ENCODE measurements at regions of chr3 and their contacts with region 1.

Region 1: DNA sequence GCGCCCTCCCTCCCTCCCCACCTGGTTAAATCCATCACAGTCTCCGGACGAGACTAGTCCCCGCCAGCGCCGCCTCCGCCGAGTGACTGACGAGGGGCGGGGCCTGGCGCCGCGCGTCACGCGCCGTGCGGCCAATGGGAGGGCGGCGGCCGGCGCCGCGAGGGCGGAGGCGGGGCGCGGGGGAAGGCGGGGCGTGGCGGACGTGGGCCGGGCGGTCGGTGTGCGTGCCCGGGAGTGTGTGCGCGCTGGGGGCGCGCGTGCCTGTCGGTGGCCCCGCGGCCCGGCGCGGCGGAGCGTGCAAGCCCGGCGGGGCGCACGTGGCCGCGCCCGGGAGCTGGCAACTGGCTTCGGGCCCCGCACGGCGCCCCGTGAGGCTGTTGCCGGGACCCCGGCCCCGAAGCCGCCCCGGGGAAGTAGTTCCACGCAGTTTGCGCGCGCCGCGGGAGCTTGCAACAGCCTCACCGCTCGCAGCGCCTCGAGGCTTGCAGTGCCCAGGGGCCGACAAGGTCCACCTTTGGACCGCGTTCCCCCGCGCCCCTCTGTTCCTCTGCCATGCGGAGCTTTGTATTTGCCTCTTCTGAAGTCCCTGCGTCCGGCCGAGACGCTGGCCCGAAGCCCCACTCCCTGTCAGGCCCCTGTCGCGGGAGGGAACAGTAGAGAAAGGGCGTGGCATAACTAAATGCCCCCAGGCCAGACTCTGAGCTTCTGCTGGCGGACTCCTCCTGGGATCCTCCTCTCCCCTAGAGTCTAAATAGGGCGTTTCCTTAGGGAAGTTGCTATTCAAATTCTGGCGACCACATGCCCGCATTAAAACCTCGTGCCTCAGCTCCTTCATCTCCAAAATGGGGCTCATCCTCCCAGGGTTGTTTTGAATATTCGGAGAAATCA is 400.9 kb downstream of the SHQ1 start:
- DNase-seq: peak; percentile 87 to 94 (median 89)
- H3K4me3 ChIP-seq: peak overlapping the region; percentile 81 to 99 (median 98)
- H3K4me3 Mint-ChIP-seq: peak overlapping the region; percentile 68 to 76
- H3K27ac ChIP-seq: peak overlapping the region; percentile 18 to 91
- H3K27ac Mint-ChIP-seq: peak overlapping the region in 4 of 7 donors; percentile 39 to 82 (median 74)
- H3K4me1 ChIP-seq: peaks cover 20 to 43% of the 10 kb centered on the region in 2 donors
- H3K4me1 Mint-ChIP-seq: peaks cover 44% of the 10 kb centered on the region
- H3K27me3 ChIP-seq: peaks cover 0 to 4% of the 10 kb centered on the region in 2 donors
- H3K27me3 Mint-ChIP-seq: peaks cover 4 to 9% (median 7%) of the 10 kb centered on the region in 3 donors
- CTCF ChIP-seq: no peak

Region 2: GRCh38 chr3:72413228-72413627 is 34.1 kb before region 1 on chr3:
- intact Hi-C with region 1: no loop called
- DNase-seq: no peak
- H3K4me3 ChIP-seq: no peak overlapping the region
- H3K4me3 Mint-ChIP-seq: no peak overlapping the region
- H3K27ac ChIP-seq: no peak overlapping the region
- H3K27ac Mint-ChIP-seq: peak overlapping the region in 1 of 7 donors; percentile 55
- H3K4me1 ChIP-seq: peaks cover 22 to 68% of the 10 kb centered on the region in 2 donors
- H3K4me1 Mint-ChIP-seq: peaks cover 65% of the 10 kb centered on the region
- H3K27me3 ChIP-seq: no peaks in the 10 kb centered on the region
- H3K27me3 Mint-ChIP-seq: no peaks in the 10 kb centered on the region
- CTCF ChIP-seq: no peak

Region 3: DNA sequence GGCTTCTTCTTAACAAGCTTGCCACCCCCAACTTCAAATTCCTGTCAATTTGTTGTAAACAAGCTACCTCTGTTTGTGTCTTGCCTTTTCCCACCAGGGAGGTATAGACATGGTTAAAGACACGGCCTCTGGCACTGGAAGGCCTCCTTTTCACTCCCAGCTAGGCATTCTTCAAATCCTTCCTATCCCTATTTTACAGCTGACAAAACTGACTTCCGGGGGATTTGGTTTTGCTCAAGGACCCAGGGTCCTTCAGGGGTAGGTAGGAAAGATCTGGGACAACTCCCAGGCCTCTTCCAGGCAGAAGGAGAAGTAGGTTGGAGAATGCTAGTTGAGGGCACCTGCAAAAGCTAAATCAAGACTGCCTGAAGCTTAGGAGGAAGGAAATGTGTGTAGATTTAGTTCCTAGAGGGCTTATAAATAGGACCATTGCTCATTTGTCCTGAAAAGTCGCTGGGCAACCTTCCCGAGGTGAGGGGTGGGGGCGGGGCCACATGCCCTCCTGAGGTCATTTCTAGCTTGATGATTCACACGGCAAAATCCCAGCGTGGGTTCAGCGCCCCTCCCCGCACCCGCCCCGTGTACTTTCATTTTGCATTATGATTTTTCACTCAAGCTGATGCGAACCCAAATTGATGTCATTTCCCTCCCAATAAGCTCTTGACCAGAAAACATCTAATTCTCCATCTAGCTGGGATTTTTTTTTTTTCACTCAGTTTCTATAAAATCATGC is 35.5 kb after region 1 on chr3:
- intact Hi-C with region 1: loop called (anchors 5 kb)
- DNase-seq: peak; percentile 81 to 95 (median 88)
- H3K4me3 ChIP-seq: peak overlapping the region; percentile 24 to 67 (median 29)
- H3K4me3 Mint-ChIP-seq: peak overlapping the region; percentile 75 to 80
- H3K27ac ChIP-seq: peak overlapping the region in 1 of 2 donors; percentile 53
- H3K27ac Mint-ChIP-seq: peak overlapping the region; percentile 54 to 86 (median 81)
- H3K4me1 ChIP-seq: peaks cover 18 to 25% of the 10 kb centered on the region in 2 donors
- H3K4me1 Mint-ChIP-seq: peaks cover 25% of the 10 kb centered on the region
- H3K27me3 ChIP-seq: no peaks in the 10 kb centered on the region
- H3K27me3 Mint-ChIP-seq: peaks cover 0 to 2% (median 1%) of the 10 kb centered on the region in 3 donors
- CTCF ChIP-seq: no peak

Region 4: GRCh38 chr3:72629191-72629631 is 181.9 kb after region 1 on chr3:
- intact Hi-C with region 1: loop called in 1 of 2 experiments (anchors 10 kb)
- DNase-seq: peak; percentile 87 to 95 (median 92)
- H3K4me3 ChIP-seq: peak overlapping the region in 1 of 3 experiments; percentile 8
- H3K4me3 Mint-ChIP-seq: no peak overlapping the region
- H3K27ac ChIP-seq: peak overlapping the region; percentile 71 to 81
- H3K27ac Mint-ChIP-seq: peak overlapping the region; percentile 78 to 96 (median 93)
- H3K4me1 ChIP-seq: peaks cover 58 to 68% of the 10 kb centered on the region in 2 donors
- H3K4me1 Mint-ChIP-seq: peaks cover 58% of the 10 kb centered on the region
- H3K27me3 ChIP-seq: no peaks in the 10 kb centered on the region
- H3K27me3 Mint-ChIP-seq: peaks cover 0 to 5% (median 4%) of the 10 kb centered on the region in 3 donors
- CTCF ChIP-seq: no peak

Region 5: DNA sequence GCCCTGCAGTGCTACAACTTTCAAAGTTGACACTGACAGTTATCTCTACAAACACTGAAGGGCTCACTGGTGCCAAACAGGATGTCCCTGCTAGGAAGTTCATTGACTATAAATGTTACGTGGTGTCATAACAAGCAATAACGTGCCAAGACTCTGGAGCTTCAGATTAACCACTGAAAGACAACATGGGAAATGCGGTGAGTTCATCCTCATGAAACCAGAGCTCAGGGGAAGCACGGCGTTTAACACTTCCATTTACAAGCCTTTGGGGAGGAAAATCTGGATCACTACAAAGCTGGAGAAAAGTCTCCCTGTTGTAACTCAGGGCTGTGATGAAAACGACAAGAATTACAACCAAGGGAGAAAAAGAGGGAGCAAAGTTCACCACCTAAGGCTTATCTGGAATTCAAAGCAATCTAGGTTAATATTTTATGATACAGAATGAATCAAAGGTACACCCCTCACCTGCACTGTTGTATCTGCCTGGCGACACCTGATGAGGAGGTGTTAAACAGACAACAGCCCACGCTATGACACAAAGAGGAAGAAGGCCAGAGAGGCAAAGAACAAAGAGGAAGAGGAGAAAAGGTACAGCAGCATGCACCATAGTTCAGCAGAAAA is 374.0 kb after region 1 on chr3:
- intact Hi-C with region 1: loop called in 1 of 2 experiments (anchors 10 kb)
- DNase-seq: peak in 2 of 3 donors; percentile 7 to 27
- H3K4me3 ChIP-seq: no peak overlapping the region
- H3K4me3 Mint-ChIP-seq: no peak overlapping the region
- H3K27ac ChIP-seq: no peak overlapping the region
- H3K27ac Mint-ChIP-seq: no peak overlapping the region
- H3K4me1 ChIP-seq: peaks cover 4 to 11% of the 10 kb centered on the region in 2 donors
- H3K4me1 Mint-ChIP-seq: peaks cover 7% of the 10 kb centered on the region
- H3K27me3 ChIP-seq: no peaks in the 10 kb centered on the region
- H3K27me3 Mint-ChIP-seq: no peaks in the 10 kb centered on the region
- CTCF ChIP-seq: no peak